Heart left ventricle (tissue), 16 donors: ENCODE measurements at regions of chr15 and their contacts with region 1.

Region 1: GRCh38 chr15:90320061-90320884 is 31.8 kb upstream of the ZNF774 start:
- DNase-seq: peak; percentile 77 to 86 (median 85)
- ATAC-seq: peak; percentile 87 to 95 (median 91)
- H3K4me3 ChIP-seq: peak overlapping the region in 6 of 12 donors; percentile 16 to 29 (median 24)
- H3K27ac ChIP-seq: peak overlapping the region in 6 of 12 donors; percentile 24 to 50 (median 39)
- H3K4me1 ChIP-seq: peaks cover 0 to 27% (median 15%) of the 10 kb centered on the region in 12 donors
- H3K27me3 ChIP-seq: no peaks in the 10 kb centered on the region
- CTCF ChIP-seq: peak; percentile 95 to 99 (median 99)
- POLR2A ChIP-seq: no peak

Region 2: DNA sequence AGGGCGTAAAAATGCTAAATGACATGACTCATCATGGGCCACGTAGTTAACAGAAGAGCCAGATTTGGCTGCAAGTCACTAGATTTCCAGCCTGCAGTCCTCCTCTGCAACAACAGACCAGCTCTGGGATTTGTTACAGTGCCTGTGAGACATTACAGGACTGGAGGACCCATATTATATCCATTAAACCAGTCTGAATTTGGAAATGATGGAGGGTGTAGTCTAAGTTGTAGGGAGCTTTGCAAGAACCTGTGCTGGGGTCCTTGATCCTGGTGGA is 42.6 kb after region 1 on chr15:
- intact Hi-C with region 1: loop called in 1 of 10 experiments (anchors 5 kb)
- DNase-seq: no peak
- ATAC-seq: peak in 3 of 4 donors; percentile 41 to 78 (median 57)
- H3K4me3 ChIP-seq: no peak overlapping the region
- H3K27ac ChIP-seq: peak overlapping the region in 10 of 12 donors; percentile 45 to 88 (median 74)
- H3K4me1 ChIP-seq: peaks cover 0 to 48% (median 16%) of the 10 kb centered on the region in 12 donors
- H3K27me3 ChIP-seq: no peaks in the 10 kb centered on the region
- CTCF ChIP-seq: no peak
- POLR2A ChIP-seq: no peak

Region 3: DNA sequence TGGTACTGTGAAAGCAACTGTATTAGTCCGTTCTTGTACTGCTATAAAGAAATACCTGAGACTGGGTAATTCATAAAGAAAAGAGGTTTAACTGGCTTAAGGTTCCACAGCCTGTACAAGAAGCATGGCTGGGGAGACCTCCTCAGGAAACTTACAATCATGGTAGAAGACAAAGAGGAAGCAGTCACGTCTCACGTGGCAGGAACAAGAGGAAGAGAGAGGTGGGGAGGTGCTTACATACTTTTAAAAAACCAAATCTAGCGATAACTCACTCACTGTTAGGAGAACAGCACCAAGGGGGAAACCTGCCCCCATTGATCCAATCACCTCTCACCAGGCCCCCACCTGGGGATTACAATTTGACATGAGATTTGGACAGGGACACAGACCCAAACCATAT is 116.7 kb after region 1 on chr15:
- intact Hi-C with region 1: no loop called
- DNase-seq: no peak
- ATAC-seq: no peak
- H3K4me3 ChIP-seq: no peak overlapping the region
- H3K27ac ChIP-seq: peak overlapping the region in 1 of 12 donors; percentile 3
- H3K4me1 ChIP-seq: peaks cover 0 to 48% (median 23%) of the 10 kb centered on the region in 12 donors
- H3K27me3 ChIP-seq: no peaks in the 10 kb centered on the region
- CTCF ChIP-seq: no peak
- POLR2A ChIP-seq: no peak

Region 4: DNA sequence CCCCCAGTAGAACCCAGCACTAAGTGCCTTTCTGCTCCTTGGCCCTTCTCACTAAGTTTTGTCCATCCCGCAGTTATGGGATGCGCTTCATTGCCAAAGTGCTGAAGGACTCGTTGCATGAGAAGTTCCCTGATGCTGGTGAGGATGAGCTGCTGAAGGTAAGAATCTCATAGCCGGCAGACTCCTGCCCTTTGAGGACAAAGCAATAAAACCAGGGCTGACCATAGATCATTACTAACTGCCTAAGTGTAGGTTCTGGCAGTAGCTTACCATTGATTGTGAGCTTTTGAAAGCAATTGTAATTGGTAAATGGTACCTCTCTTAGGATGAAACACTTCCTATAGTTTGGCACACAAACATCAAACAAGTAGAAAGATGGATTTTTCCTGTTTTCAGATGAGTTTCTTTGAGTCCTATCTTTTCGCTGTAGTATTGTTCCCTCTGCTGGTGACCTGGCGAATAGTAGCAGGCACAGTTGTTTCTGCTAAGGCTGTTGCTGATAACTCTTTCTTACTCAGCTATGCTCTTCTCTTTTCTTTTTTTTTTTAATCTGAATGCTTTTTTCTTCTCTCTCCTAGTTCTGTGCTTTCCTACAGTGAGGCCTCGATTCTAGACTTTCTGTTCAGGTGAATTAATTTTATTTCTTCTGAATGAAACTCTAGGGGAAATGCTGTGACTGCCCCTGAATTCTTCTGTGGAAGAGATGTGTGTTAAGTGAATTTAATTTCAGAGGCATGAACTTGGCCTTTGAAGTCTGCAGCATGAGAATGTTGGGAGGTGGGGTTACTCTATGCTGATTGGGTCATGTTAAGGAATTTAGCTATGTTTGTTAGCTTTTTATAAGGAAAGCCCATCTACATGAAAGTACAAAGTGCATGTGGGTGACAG is 162.1 kb after region 1 on chr15:
- intact Hi-C with region 1: loop called (anchors 1 to 5 kb)
- DNase-seq: peak in 2 of 5 donors; percentile 23 to 40
- ATAC-seq: peak; percentile 47 to 68 (median 62)
- H3K4me3 ChIP-seq: no peak overlapping the region
- H3K27ac ChIP-seq: no peak overlapping the region
- H3K4me1 ChIP-seq: peaks cover 0 to 6% (median 0%) of the 10 kb centered on the region in 12 donors
- H3K27me3 ChIP-seq: no peaks in the 10 kb centered on the region
- CTCF ChIP-seq: peak; percentile 57 to 88 (median 72)
- POLR2A ChIP-seq: no peak

Region 5: GRCh38 chr15:90598031-90598577 is 277.8 kb after region 1 on chr15:
- intact Hi-C with region 1: loop called in 4 of 10 experiments (anchors 10 kb)
- DNase-seq: peak in 4 of 5 donors; percentile 56 to 72 (median 64)
- ATAC-seq: peak; percentile 72 to 78 (median 76)
- H3K4me3 ChIP-seq: no peak overlapping the region
- H3K27ac ChIP-seq: peak overlapping the region; percentile 25 to 87 (median 66)
- H3K4me1 ChIP-seq: peaks cover 8 to 59% (median 35%) of the 10 kb centered on the region in 12 donors
- H3K27me3 ChIP-seq: no peaks in the 10 kb centered on the region
- CTCF ChIP-seq: peak in 7 of 12 donors; percentile 12 to 47 (median 22)
- POLR2A ChIP-seq: no peak

Region 6: DNA sequence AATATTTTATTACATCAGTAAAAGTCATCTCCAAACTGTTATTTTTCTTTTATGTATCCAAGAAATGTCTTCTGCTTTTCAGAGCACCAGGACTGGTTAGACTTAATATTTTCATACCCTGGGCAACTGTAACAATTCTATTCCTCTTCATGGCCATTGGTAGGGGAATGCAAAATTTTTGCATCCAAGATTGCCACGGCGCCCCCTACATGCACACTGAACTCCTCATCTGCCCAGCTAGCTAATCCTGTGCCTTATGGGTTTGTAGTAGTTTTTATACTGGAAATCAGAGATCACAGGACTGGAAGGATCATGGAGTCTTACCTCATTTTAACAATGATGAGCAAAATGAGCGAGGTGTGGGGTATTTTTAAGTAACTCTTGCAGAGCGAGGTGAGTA is 283.6 kb after region 1 on chr15:
- intact Hi-C with region 1: loop called in 4 of 10 experiments (anchors 10 kb)
- DNase-seq: peak in 2 of 5 donors; percentile 37 to 67
- ATAC-seq: peak in 2 of 4 donors; percentile 36 to 49
- H3K4me3 ChIP-seq: no peak overlapping the region
- H3K27ac ChIP-seq: no peak overlapping the region
- H3K4me1 ChIP-seq: peaks cover 0 to 10% (median 5%) of the 10 kb centered on the region in 12 donors
- H3K27me3 ChIP-seq: no peaks in the 10 kb centered on the region
- CTCF ChIP-seq: peak in 10 of 12 donors; percentile 18 to 56 (median 42)
- POLR2A ChIP-seq: no peak

Region 7: GRCh38 chr15:90620379-90621067 is 300.2 kb after region 1 on chr15:
- intact Hi-C with region 1: loop called in 2 of 10 experiments (anchors 10 kb)
- DNase-seq: peak in 1 of 5 donors; percentile 35
- ATAC-seq: peak in 2 of 4 donors; percentile 18 to 36
- H3K4me3 ChIP-seq: no peak overlapping the region
- H3K27ac ChIP-seq: peak overlapping the region in 5 of 12 donors; percentile 2 to 20 (median 17)
- H3K4me1 ChIP-seq: peaks cover 0 to 23% (median 0%) of the 10 kb centered on the region in 12 donors
- H3K27me3 ChIP-seq: no peaks in the 10 kb centered on the region
- CTCF ChIP-seq: no peak
- POLR2A ChIP-seq: no peak

Region 8: DNA sequence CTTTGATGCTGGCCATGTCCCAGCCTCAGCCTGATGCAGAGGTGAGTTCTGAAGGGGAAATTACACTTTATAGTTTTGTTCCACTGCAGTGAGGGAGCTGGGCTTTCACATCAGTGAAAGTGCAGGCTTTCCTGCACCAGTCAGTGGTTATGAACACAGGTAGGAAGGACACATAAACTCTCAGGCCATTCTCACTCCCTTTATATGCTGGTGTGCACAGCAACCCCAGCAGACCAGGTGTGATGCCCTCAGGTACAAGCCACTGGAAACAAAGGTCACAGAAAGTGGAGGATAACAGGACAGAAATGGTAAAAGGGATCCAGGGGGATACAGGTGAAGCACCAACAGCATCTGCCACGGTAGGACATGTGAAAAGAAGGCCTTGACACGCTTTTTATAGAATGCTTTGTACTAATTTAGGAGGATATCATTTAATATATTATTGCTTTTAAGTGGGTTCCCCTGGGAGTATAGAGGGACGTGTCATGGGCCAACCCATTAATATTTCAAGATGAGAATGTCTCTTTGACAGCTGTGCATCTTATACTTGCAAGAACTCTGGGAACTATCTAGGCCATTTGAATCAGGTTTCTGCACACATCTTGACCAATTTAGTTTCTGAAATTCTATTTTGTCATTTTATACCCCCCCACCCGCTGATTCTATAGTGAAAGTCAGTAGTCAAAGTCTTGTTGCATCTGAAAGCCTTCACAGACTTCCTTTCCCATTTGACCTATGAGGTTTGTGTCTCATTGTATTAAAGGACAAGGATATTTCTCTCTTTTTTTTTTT is 371.9 kb after region 1 on chr15:
- intact Hi-C with region 1: loop called in 2 of 10 experiments (anchors 5 to 10 kb)
- DNase-seq: no peak
- ATAC-seq: no peak
- H3K4me3 ChIP-seq: no peak overlapping the region
- H3K27ac ChIP-seq: no peak overlapping the region
- H3K4me1 ChIP-seq: peaks cover 0 to 6% (median 0%) of the 10 kb centered on the region in 12 donors
- H3K27me3 ChIP-seq: no peaks in the 10 kb centered on the region
- CTCF ChIP-seq: no peak
- POLR2A ChIP-seq: no peak